ENCODE measurements at regions of chr5 and their contacts with region 1.

Region 1: DNA sequence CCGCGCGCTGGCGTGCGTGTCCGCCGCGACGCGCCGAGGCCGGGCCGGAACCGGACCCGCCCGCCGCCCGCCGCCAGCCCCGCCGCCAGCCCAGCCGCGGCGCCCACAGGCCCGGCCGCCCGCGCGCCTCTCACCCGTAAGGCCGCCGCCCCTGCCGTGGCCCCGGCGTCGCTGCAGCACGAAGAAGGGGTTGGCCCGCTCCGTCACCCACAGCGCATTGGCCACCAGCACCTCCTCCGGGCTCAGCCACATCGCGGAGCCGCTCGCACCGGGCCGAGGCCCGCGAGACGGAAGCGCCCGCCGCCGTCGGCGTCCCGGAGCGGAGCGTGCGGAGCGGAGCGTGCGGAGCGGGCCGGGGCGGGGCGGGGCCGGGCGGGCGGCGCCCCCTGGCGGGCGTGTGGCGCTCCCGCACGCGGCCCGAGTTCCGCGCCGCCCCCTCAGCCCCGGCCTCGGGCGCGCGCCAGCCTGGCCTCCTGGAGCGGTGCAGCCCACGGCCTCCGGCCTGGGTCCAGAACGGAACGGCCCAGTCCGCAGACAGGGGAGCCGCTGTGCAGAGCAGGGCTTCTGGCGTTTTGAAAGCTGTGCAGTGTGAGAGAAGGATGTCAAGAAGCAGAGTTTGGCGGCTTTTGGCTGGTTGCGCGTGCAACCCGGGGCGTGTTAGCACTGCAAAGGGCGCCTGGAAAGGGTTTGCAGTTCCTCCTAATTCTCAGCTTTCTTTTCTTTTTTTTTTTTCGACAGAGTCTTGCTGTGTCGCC is at the start of gene TBC1D9B:
- DNase-seq: peak; percentile 61 to 80
- H3K4me3 ChIP-seq: peak within 1 kb of the TSS; percentile 67 to 79
- H3K27ac ChIP-seq: peak within 1 kb of the TSS; percentile 79 to 80
- H3K4me1 ChIP-seq: peaks cover 0 to 22% (median 17%) of the 10 kb centered on the region in 4 donors
- H3K27me3 ChIP-seq: no peaks in the 10 kb centered on the region
- CTCF ChIP-seq: peak in 1 of 2 experiments; percentile 70

Region 2: DNA sequence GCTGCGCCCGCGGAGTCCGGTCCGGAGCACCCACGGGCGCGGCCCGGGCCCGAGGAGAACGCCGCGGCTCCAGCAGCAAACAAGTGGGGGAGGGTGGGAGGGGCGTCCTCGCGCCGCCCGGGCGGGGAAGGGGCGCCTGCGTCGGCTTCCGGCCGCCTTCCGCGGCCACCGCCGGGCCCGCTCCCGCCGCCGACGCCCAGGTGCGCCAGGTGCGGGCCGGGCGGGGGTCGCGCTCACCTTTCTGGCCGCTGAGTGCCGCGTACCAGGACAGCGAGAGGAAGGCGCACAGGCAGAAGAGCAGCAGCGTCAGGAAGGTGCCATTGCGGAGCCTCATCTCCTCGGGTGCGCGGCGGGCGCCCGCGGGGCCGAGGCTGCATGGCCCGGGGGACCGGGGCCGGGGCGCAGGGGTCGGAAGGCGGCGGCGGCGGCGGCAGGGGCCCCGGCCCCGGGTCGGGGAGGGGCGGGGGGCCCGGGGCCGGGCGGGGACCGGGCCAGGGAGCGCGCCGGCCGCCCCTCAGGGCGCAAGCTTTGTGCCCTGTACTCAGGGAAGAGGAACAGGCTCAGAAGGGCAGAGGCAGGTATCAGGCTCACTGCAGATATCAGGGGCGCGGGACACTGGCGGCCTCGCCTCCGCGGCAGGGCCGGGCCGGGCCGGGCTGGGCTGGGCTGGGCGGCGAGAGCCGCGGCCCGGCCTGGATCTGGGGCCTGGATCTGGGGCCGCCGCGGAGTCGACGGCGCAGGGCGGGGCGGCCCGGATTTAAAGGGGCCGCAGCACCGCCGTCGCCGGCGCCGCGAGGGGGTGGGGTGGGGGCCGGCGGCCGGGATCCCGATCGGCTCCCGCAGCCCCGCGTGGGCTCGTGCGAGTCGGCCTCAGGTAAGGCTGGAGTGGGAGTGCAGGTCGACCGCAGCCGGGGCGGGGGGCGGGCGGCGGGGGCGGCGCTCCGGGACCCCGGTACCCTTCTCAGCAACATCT is 101.2 kb before region 1 on chr5 and contains the start of gene MGAT4B:
- intact Hi-C with region 1: loop called (anchors 5 kb)
- DNase-seq: peak; percentile 71 to 89
- H3K4me3 ChIP-seq: peak within 1 kb of the TSS; percentile 86 to 99
- H3K27ac ChIP-seq: peak within 1 kb of the TSS; percentile 94 to 96
- H3K4me1 ChIP-seq: peaks cover 0 to 50% (median 43%) of the 10 kb centered on the region in 4 donors
- H3K27me3 ChIP-seq: no peaks in the 10 kb centered on the region
- CTCF ChIP-seq: no peak

Region 3: GRCh38 chr5:179858586-179859427 is 48.9 kb before region 1 on chr5 and contains the start of gene MRNIP:
- intact Hi-C with region 1: no loop called
- DNase-seq: peak; percentile 98 to 99
- H3K4me3 ChIP-seq: peak within 1 kb of the TSS; percentile 88 to 93
- H3K27ac ChIP-seq: peak within 1 kb of the TSS; percentile 91 to 95
- H3K4me1 ChIP-seq: peaks cover 0 to 38% (median 17%) of the 10 kb centered on the region in 4 donors
- H3K27me3 ChIP-seq: no peaks in the 10 kb centered on the region
- CTCF ChIP-seq: no peak

Region 4: DNA sequence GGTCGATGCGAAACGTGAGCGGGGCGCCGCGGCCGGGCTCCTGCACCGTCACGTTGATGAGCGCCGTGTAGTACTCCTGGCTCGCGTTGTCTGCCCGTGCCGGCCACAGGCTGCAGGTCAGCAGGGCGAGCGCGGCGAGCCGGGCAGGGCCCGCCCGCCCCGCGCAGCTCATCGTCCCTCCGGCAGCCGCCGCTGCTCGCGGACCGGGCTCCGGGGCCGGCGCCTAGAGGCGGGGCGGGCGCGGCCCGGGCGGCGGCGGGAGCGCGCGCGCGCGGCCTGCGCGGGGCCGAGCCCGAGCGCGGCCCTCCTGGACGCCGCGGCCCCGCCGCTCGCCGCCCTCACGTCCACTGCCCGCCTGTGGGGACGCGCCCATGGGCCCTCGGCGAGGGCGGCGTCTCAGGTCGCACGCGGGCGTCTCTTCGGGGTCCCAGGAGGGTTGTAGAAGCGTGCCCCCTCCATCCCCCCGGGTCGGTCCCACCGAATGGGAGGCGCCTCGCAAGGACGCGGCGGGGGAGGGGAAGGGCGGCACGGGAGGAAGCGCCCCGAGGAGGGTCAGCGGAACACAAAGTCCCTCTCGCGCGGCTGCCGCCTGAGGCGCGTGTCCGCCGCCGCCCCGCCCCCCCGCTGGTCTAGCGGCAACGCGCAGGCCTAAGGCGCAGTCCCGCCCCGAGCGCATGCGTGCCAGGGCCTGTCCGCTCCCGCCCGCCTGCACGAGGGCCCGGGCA is 163.9 kb after region 1 on chr5 and contains the start of gene RNF130:
- intact Hi-C with region 1: loop called (anchors 5 kb)
- DNase-seq: peak; percentile 89 to 97
- H3K4me3 ChIP-seq: peak within 1 kb of the TSS; percentile 96 to 97
- H3K27ac ChIP-seq: peak within 1 kb of the TSS; percentile 93 to 99
- H3K4me1 ChIP-seq: peaks cover 0 to 22% (median 16%) of the 10 kb centered on the region in 4 donors
- H3K27me3 ChIP-seq: no peaks in the 10 kb centered on the region
- CTCF ChIP-seq: no peak

Measured in tibial artery (tissue), 4 donors.